Aorta (tissue), 5 donors: ENCODE measurements at regions of chr17 and their contacts with region 1.

Region 1: DNA sequence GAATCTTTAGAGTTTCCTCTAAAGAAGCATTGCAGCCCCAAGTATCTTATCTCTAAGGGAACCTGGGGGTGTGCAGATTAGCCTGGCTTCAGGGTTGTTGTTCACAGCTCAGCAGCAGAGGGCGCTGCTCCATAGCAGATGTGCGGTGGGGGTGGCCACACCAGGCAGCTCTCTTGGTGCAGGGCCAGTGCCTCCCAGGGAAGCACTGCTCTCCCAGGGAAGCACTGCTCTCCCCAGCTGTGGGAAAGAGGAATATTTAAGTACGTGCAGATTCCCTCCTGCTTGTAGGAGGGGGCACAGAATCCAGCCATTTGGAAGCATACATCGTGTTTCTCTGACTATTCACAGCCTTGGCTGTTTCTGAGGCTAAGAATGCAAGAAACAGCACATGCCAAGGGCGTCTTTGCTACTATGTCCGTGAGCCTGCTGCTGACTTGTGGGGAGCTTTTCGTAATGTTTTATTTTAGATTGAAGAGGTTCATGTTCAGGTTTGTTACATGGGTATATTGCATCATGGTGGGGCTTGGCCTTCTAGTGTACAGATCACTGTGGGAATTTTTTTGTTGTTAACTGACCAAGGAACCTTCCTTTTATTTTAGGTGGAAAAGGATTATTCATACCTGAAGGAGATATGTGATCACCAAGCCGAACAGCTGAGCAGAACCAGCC is 217.8 kb downstream of the SPECC1 start:
- DNase-seq: peak; percentile 90 to 95
- ATAC-seq: peak; percentile 95
- H3K4me3 ChIP-seq: no peak overlapping the region
- H3K27ac ChIP-seq: peak overlapping the region; percentile 18 to 64
- H3K4me1 ChIP-seq: peaks cover 5 to 6% of the 10 kb centered on the region in 2 donors
- H3K27me3 ChIP-seq: no peaks in the 10 kb centered on the region

Region 2: DNA sequence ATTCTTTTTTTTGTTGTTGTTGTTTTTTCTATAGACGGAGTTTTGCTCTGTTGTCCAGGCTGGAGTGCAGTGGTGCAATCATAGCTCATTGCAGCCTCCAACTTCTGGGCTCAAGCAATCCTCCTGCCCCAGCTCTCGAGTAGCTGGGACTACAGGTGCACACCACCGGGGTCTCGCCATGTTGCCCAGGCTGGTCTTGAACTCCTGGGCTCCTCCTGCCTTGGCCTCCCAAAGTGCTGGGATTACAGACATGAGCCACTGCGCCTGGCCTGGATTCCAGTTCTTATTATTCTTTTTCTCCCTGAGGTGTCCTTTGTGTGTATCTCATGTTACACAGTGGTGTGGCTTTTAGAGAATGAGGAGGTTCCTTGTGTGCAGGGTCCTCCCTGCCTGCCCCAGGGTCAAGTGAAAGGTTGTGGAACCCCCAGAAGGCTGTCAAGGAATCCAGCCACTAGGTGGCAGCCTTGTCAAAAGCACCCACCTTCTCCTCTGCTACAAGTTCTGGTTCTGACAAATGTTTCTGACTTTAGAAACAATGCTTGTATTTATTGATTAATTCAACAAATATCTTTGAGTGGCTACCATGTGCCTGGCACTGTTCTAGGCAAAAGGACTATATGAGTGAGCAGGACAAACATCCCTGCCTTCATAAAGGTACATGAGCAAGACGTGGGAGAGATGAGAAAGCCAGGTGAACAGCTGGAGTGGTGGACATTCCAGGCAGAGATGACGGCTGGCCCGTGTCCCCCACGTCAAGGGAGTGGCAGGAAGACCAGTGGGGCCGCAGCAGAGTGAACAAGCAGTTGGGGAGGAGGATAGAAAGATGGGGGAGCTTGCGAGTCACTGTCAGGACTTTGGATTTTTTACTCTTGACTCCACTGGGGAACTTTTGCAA is 105.3 kb before region 1 on chr17:
- intact Hi-C with region 1: loop called (anchors 1 to 2 kb)
- DNase-seq: peak; percentile 77 to 82
- ATAC-seq: peak; percentile 73
- H3K4me3 ChIP-seq: no peak overlapping the region
- H3K27ac ChIP-seq: peak overlapping the region in 1 of 2 donors; percentile 48
- H3K4me1 ChIP-seq: no peaks in the 10 kb centered on the region
- H3K27me3 ChIP-seq: no peaks in the 10 kb centered on the region

Region 3: DNA sequence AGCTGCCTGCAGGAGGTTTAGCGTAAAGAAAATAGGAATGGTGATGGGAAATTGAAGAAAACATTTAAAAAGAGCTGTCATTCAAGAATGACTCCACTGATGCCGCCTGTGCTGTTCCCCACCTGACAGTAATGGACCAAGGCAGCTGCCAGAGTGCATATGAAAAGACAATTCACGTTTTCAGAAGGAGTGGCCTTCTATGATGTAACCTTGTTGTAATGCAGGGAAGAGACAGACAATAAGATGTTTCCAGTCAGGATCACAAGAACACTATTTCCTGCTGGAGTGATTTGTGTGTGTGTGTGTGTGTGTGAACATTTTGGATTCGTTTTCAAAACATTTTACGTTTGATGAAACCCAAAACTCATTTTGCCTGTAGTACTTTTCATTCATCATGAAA is 36.6 kb after region 1 on chr17:
- intact Hi-C with region 1: loop called in 1 of 2 experiments (anchors 5 kb)
- DNase-seq: no peak
- ATAC-seq: no peak
- H3K4me3 ChIP-seq: no peak overlapping the region
- H3K27ac ChIP-seq: peak overlapping the region; percentile 89 to 91
- H3K4me1 ChIP-seq: peaks cover 2 to 3% of the 10 kb centered on the region in 2 donors
- H3K27me3 ChIP-seq: no peaks in the 10 kb centered on the region

Region 4: DNA sequence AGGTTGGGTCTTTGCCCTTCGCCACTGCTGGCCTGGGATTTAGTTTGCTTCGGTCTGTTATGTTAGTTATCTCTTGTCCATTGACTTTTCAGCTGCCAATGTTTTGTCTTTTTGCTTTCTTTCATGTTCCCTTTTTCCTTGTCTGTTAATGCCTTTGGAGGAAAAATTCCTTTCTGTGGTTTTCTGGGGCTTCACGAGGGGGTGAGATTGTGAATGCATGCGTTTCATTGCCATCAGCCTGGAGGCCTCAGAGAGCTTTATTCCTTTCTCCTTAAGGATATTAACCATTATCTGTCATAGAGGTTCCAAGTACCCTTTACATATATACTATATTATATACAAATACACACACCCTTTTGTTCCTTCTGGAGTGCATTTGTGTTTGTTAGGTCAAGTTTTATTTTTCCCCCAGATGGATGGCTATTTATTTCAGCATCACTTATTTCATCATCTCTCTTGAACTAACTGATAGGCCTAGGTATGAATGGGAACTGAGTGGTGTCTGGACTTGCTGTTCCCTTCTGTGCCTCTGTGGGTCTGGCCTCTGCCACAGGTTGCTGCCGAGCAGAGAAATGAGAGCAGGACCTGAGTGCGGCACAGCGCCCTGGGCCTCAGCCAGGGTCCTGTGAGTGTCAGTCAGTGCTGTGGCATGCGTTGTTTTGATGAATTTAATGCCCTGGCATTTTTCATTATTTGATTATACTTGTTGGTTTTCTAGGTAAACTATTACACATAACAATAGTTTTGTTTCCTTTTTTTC is 47.0 kb after region 1 on chr17:
- intact Hi-C with region 1: no loop called
- DNase-seq: no peak
- ATAC-seq: no peak
- H3K4me3 ChIP-seq: no peak overlapping the region
- H3K27ac ChIP-seq: peak overlapping the region in 1 of 2 donors; percentile 28
- H3K4me1 ChIP-seq: peaks cover 0 to 2% of the 10 kb centered on the region in 2 donors
- H3K27me3 ChIP-seq: no peaks in the 10 kb centered on the region

Region 5: GRCh38 chr17:20315821-20316220 is 88.9 kb after region 1 on chr17:
- intact Hi-C with region 1: loop called (anchors 1 to 2 kb)
- DNase-seq: no peak
- ATAC-seq: no peak
- H3K4me3 ChIP-seq: no peak overlapping the region
- H3K27ac ChIP-seq: no peak overlapping the region
- H3K4me1 ChIP-seq: no peaks in the 10 kb centered on the region
- H3K27me3 ChIP-seq: no peaks in the 10 kb centered on the region